ENCODE measurements at regions of chr3 and their contacts with region 1.

Region 1: GRCh38 chr3:194070634-194071409 is 65.1 kb upstream of the HES1 start:
- DNase-seq: peak; percentile 93
- ATAC-seq: peak; percentile 93
- H3K4me3 Mint-ChIP-seq: peak overlapping the region; percentile 76
- H3K27ac Mint-ChIP-seq: peak overlapping the region; percentile 84
- H3K4me1 Mint-ChIP-seq: peaks cover 41% of the 10 kb centered on the region
- H3K27me3 Mint-ChIP-seq: no peaks in the 10 kb centered on the region
- CTCF ChIP-seq: no peak

Region 2: GRCh38 chr3:193439423-193439822 is 631.4 kb before region 1 on chr3:
- CTCF ChIA-PET with region 1: no interaction called
- POLR2A ChIA-PET with region 1: no interaction called
- intact Hi-C with region 1: no loop called
- DNase-seq: no peak
- ATAC-seq: no peak
- H3K4me3 Mint-ChIP-seq: no peak overlapping the region
- H3K27ac Mint-ChIP-seq: no peak overlapping the region
- H3K4me1 Mint-ChIP-seq: no peaks in the 10 kb centered on the region
- H3K27me3 Mint-ChIP-seq: no peaks in the 10 kb centered on the region
- CTCF ChIP-seq: no peak

Region 3: GRCh38 chr3:193788189-193788991 is 282.4 kb before region 1 on chr3:
- CTCF ChIA-PET with region 1: no interaction called
- POLR2A ChIA-PET with region 1: no interaction called
- intact Hi-C with region 1: loop called (anchors 1 kb)
- DNase-seq: peak; percentile 36
- ATAC-seq: peak; percentile 98
- H3K4me3 Mint-ChIP-seq: no peak overlapping the region
- H3K27ac Mint-ChIP-seq: peak overlapping the region; percentile 15
- H3K4me1 Mint-ChIP-seq: peaks cover 16% of the 10 kb centered on the region
- H3K27me3 Mint-ChIP-seq: peaks cover 25% of the 10 kb centered on the region
- CTCF ChIP-seq: peak; percentile 34

Region 4: DNA sequence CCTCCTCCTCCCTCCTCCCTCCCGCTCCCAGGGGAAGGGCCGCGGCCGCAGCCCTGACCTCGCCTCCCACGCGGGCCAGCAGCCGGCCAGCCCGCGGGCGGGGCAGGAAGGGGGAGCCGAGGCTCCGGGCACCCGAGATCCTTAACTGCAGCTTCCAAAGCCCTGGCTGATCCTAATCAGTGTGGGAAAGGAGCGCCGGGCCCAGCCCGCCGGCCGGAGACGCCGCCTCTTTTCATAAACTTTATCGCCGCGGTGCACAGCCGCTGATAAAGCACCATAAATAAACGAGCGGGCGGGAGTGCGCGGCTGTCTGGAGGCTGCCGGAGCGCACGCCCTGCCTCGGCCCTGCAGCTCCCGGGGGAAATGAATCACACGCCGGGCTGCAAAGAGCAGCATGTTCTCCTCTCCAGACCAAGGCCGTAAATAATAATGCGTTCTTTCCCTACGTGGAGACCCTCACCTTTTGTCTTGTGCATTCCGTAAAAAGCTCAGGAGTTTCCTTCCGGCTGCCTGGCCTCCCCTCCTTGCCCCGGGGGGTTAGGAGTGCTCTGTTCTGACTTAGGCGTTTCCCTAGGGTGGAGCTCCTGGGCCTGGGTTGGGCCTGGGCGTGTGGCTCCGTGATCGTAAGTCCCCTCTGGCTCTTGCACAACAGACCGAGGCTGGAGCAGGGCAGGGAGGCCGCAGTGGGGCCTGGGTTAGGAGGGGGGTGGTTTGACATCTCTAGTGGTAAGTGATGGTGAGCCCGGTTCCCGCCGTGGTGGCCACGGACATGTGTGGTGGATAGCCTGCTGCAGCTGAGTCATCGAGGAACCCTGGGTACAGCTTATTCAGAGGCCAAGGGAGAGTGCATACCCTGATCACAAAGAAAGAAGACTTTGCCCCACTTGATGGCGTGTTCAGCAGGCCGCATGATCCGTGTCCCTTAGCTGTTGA is 67.4 kb before region 1 on chr3:
- CTCF ChIA-PET with region 1: no interaction called
- POLR2A ChIA-PET with region 1: interaction called, 12 read pairs
- intact Hi-C with region 1: loop called (anchors 1 kb)
- DNase-seq: peak; percentile 70
- ATAC-seq: peak; percentile 94
- H3K4me3 Mint-ChIP-seq: peak overlapping the region; percentile 76
- H3K27ac Mint-ChIP-seq: peak overlapping the region; percentile 65
- H3K4me1 Mint-ChIP-seq: peaks cover 40% of the 10 kb centered on the region
- H3K27me3 Mint-ChIP-seq: peaks cover 6% of the 10 kb centered on the region
- CTCF ChIP-seq: no peak

Region 5: DNA sequence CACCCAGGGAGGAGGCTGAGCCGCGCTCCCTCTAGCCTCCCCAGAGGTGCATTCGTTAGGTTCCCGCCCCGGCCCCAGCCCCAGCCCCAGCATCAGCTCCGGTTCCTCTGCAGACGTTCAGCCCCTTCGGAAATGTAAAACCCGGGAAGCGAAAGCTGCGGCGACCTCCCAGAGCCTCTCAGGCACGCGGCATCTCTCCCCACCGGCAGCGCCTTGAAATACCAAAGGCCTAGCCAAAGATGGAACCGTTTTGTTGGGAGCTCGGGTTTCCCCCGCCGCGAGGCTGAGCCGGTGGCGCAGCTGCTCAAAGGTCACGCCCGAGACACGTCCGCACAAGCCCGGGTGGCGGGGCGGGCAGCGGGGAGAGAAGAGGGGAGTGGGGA is 12.6 kb before region 1 on chr3:
- CTCF ChIA-PET with region 1: interaction called, 3 read pairs
- POLR2A ChIA-PET with region 1: interaction called, 26 read pairs
- intact Hi-C with region 1: loop called (anchors 1 kb)
- DNase-seq: peak; percentile 34
- ATAC-seq: peak; percentile 78
- H3K4me3 Mint-ChIP-seq: peak overlapping the region; percentile 80
- H3K27ac Mint-ChIP-seq: peak overlapping the region; percentile 53
- H3K4me1 Mint-ChIP-seq: peaks cover 20% of the 10 kb centered on the region
- H3K27me3 Mint-ChIP-seq: no peaks in the 10 kb centered on the region
- CTCF ChIP-seq: no peak

Region 6: GRCh38 chr3:194089357-194090177 is 18.7 kb after region 1 on chr3:
- CTCF ChIA-PET with region 1: no interaction called
- POLR2A ChIA-PET with region 1: interaction called, 20 read pairs
- intact Hi-C with region 1: loop called (anchors 1 kb)
- DNase-seq: peak; percentile 41
- ATAC-seq: peak; percentile 86
- H3K4me3 Mint-ChIP-seq: peak overlapping the region; percentile 9
- H3K27ac Mint-ChIP-seq: peak overlapping the region; percentile 71
- H3K4me1 Mint-ChIP-seq: peaks cover 43% of the 10 kb centered on the region
- H3K27me3 Mint-ChIP-seq: no peaks in the 10 kb centered on the region
- CTCF ChIP-seq: no peak

Region 7: DNA sequence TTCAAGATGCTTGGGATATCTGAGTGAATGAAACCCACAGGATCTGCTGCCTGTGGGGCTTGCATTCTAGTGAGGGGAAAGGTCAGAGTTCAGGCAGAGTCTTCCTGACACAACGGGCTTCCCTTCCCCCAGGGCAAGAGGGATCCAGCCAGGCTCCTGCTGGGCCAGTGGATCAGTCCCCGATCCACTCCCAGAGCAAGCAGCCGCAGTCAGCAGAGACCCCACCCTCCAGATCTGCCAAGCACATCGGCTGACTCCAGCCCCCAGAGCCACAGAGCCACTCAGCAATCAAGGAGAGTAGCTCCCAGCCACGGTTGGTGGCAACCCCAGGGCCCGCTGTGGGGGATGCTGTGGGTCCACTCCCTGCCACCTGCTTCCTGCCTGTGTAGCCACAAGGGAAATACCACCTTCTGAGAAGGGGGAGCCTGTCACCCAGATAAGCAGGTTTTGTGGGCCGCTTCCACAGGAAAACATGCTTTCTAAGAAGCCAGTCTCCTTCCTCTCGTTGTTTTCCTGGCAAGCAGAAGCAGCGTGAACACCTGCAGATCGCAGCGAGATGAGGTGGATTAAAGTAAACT is 235.4 kb after region 1 on chr3:
- CTCF ChIA-PET with region 1: no interaction called
- POLR2A ChIA-PET with region 1: interaction called, 6 read pairs
- intact Hi-C with region 1: loop called (anchors 2 kb)
- DNase-seq: peak; percentile 51
- ATAC-seq: peak; percentile 61
- H3K4me3 Mint-ChIP-seq: peak overlapping the region; percentile 70
- H3K27ac Mint-ChIP-seq: peak overlapping the region; percentile 84
- H3K4me1 Mint-ChIP-seq: no peaks in the 10 kb centered on the region
- H3K27me3 Mint-ChIP-seq: no peaks in the 10 kb centered on the region
- CTCF ChIP-seq: no peak

Region 8: GRCh38 chr3:194685718-194686555 is 615.1 kb after region 1 on chr3 and contains the start of gene FAM43A:
- CTCF ChIA-PET with region 1: no interaction called
- POLR2A ChIA-PET with region 1: no interaction called
- intact Hi-C with region 1: no loop called
- DNase-seq: peak; percentile 77
- ATAC-seq: peak; percentile 47
- H3K4me3 Mint-ChIP-seq: peak within 1 kb of the TSS; percentile 91
- H3K27ac Mint-ChIP-seq: peak within 1 kb of the TSS; percentile 93
- H3K4me1 Mint-ChIP-seq: peaks cover 67% of the 10 kb centered on the region
- H3K27me3 Mint-ChIP-seq: no peaks in the 10 kb centered on the region
- CTCF ChIP-seq: no peak
- total RNA-seq, gene FAM43A: 25.4 and 27.2 TPM in 2 replicates